ENCODE measurements at regions of chr16 and their contacts with region 1.

Region 1: DNA sequence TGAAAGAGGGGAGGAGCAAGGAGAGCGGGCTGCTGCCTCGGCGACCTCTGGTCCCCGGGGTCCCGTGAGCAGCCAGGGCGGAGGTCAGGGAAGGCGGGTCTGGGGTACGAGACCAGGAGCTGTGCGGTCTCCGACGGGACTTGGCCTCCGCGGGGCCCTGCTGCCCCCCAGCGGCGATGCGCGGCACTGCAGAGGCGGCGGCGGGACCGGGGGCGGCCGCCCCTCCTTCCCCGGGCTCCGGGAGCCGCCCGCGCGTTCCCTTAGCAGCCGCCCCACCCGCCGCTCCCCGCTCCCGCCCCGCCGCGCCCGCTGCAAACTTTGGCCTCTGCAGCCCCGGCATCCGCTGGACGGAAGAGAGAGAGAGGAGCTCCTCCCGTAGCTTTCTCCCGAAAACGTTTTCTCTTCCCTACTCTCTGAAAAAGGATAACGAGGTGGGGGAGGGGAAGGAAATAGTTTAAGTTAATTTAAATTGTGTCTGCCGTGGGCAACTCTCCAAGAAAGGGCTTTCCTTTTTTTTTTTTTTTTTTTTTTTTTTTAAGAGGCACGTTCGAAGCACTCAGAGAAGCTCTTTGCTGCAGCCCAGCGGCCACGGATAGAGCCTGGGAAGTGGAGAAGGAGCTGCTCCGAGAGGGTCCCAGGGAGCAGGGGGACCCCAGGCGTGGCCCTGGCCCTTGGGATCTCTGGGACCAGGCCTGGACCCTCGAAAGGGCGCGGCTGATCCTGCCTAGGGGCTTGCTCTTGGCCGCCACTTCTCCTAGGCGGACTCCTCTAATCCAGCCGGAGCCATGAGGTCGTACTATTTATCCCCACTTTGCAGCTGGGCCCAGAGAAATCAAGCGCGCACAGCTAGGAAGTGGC is 43.2 kb downstream of the C16orf82 start:
- DNase-seq: peak; percentile 49
- H3K4me3 Mint-ChIP-seq: no peak overlapping the region
- H3K27ac Mint-ChIP-seq: no peak overlapping the region
- H3K4me1 Mint-ChIP-seq: no peaks in the 10 kb centered on the region
- H3K27me3 Mint-ChIP-seq: peaks cover 28% of the 10 kb centered on the region
- CTCF ChIP-seq: peak; percentile 97

Region 2: DNA sequence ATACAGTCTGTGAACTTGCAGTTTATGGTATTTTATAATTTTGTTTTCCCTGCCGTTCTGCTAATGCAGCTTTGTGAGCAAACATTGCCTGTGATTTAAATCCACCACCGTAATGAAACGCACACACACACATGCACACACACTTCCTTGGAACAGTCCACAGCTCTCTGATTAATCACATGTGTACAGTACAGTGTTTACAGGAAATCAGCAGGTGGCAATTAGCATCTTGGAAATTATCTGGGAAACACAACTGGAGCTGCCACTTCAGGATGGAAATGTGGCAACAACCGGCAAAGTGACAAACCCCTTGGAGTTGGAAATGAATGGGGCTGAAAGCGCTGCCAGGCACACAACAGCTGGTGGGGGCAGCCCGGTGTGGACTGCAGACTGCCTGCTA is 1839.3 kb before region 1 on chr16:
- CTCF ChIA-PET with region 1: interaction called, 10 read pairs
- POLR2A ChIA-PET with region 1: no interaction called
- intact Hi-C with region 1: no loop called
- DNase-seq: no peak
- H3K4me3 Mint-ChIP-seq: no peak overlapping the region
- H3K27ac Mint-ChIP-seq: no peak overlapping the region
- H3K4me1 Mint-ChIP-seq: no peaks in the 10 kb centered on the region
- H3K27me3 Mint-ChIP-seq: no peaks in the 10 kb centered on the region
- CTCF ChIP-seq: no peak

Region 3: DNA sequence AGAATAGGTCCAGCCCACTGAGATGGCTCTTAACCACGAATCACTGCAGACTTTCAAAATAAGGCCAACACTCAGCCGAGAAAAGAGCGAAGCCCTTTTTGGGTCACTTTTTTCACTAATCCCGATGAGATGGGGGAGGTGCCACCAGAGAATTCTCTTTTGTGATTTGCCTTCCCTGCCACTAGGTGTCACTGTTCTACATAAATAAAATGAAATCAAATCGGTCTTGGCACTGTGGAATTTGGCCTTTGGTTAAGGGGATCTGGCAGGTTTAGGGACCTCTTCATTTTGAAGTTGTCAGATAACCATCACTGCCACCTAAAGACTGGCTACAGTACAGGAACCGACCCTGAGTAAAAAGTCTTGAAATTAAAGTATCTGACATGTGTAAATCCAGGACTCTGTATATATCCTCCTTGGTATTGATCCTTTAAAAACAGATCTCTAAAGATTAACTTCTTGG is 1271.1 kb before region 1 on chr16:
- CTCF ChIA-PET with region 1: interaction called, 11 read pairs
- POLR2A ChIA-PET with region 1: no interaction called
- intact Hi-C with region 1: loop called (anchors 1 kb)
- DNase-seq: peak; percentile 33
- H3K4me3 Mint-ChIP-seq: no peak overlapping the region
- H3K27ac Mint-ChIP-seq: no peak overlapping the region
- H3K4me1 Mint-ChIP-seq: no peaks in the 10 kb centered on the region
- H3K27me3 Mint-ChIP-seq: no peaks in the 10 kb centered on the region
- CTCF ChIP-seq: peak; percentile 76

Region 4: DNA sequence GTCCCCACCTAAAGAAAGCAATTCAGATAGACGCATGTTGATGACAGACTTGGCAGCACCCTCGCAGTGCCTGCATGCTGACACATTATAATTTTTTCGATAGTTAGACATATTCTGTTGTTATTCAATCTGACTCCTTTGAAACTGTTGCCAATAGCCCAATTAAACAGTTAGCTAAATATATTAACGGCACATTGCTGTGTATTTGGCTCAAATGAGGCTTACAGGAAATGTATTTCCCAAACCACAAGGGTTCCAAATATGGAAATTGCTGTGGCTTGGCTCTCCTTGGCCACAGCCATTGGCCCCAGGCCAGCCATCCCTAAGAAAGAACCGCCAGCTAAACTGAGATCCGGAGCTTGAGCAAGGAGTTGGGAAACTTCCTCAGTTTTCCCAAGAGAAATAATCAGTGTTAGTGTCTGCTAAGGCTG is 12.1 kb before region 1 on chr16:
- CTCF ChIA-PET with region 1: interaction called, 12 read pairs
- POLR2A ChIA-PET with region 1: no interaction called
- intact Hi-C with region 1: no loop called
- DNase-seq: peak; percentile 35
- H3K4me3 Mint-ChIP-seq: no peak overlapping the region
- H3K27ac Mint-ChIP-seq: no peak overlapping the region
- H3K4me1 Mint-ChIP-seq: no peaks in the 10 kb centered on the region
- H3K27me3 Mint-ChIP-seq: peaks cover 12% of the 10 kb centered on the region
- CTCF ChIP-seq: no peak

Region 5: GRCh38 chr16:27138266-27138665 is 28.4 kb after region 1 on chr16:
- CTCF ChIA-PET with region 1: no interaction called
- POLR2A ChIA-PET with region 1: no interaction called
- intact Hi-C with region 1: no loop called
- DNase-seq: no peak
- H3K4me3 Mint-ChIP-seq: no peak overlapping the region
- H3K27ac Mint-ChIP-seq: no peak overlapping the region
- H3K4me1 Mint-ChIP-seq: no peaks in the 10 kb centered on the region
- H3K27me3 Mint-ChIP-seq: peaks cover 11% of the 10 kb centered on the region
- CTCF ChIP-seq: no peak

Measured in MCF 10A (cell line).